Panc1 (cell line): ENCODE measurements at regions of chr6 and their contacts with region 1.

Region 1: GRCh38 chr6:158718461-158719046 is 68.7 kb downstream of the SYTL3 start:
- DNase-seq: no peak
- ATAC-seq: peak; percentile 70
- H3K4me3 ChIP-seq: no peak overlapping the region
- H3K27ac ChIP-seq: no peak overlapping the region
- H3K4me1 ChIP-seq: no peaks in the 10 kb centered on the region
- H3K27me3 ChIP-seq: no peaks in the 10 kb centered on the region
- CTCF ChIP-seq: peak; percentile 87

Region 2: GRCh38 chr6:158666628-158667359 is 51.8 kb before region 1 on chr6:
- CTCF ChIA-PET with region 1: no interaction called
- POLR2A ChIA-PET with region 1: no interaction called
- in situ Hi-C with region 1: no loop called
- intact Hi-C with region 1: no loop called
- DNase-seq: no peak
- ATAC-seq: no peak
- H3K4me3 ChIP-seq: no peak overlapping the region
- H3K27ac ChIP-seq: no peak overlapping the region
- H3K4me1 ChIP-seq: no peaks in the 10 kb centered on the region
- H3K27me3 ChIP-seq: peaks cover 9% of the 10 kb centered on the region; the same call in 1 of the 2 replicates
- CTCF ChIP-seq: no peak

Region 3: GRCh38 chr6:158924499-158925425 is 206.2 kb after region 1 on chr6:
- CTCF ChIA-PET with region 1: no interaction called
- POLR2A ChIA-PET with region 1: interaction called, 13 read pairs
- in situ Hi-C with region 1: no loop called
- intact Hi-C with region 1: no loop called
- DNase-seq: no peak
- ATAC-seq: no peak
- H3K4me3 ChIP-seq: no peak overlapping the region
- H3K27ac ChIP-seq: no peak overlapping the region
- H3K4me1 ChIP-seq: no peaks in the 10 kb centered on the region
- H3K27me3 ChIP-seq: no peaks in the 10 kb centered on the region
- CTCF ChIP-seq: no peak

Region 4: GRCh38 chr6:159134701-159135364 is 416.3 kb after region 1 on chr6:
- CTCF ChIA-PET with region 1: no interaction called
- POLR2A ChIA-PET with region 1: no interaction called
- in situ Hi-C with region 1: no loop called
- intact Hi-C with region 1: loop called (anchors 10 kb)
- DNase-seq: peak; percentile 74
- ATAC-seq: peak; percentile 91
- H3K4me3 ChIP-seq: no peak overlapping the region
- H3K27ac ChIP-seq: no peak overlapping the region
- H3K4me1 ChIP-seq: no peaks in the 10 kb centered on the region
- H3K27me3 ChIP-seq: peaks cover 12% of the 10 kb centered on the region
- CTCF ChIP-seq: peak; percentile 96